Activated naive CD4-positive, alpha-beta T cell treated with anti-CD3 and anti-CD28 coated beads for 36 hours (primary cell): ENCODE measurements at regions of chr19 and their contacts with region 1.

Region 1: DNA sequence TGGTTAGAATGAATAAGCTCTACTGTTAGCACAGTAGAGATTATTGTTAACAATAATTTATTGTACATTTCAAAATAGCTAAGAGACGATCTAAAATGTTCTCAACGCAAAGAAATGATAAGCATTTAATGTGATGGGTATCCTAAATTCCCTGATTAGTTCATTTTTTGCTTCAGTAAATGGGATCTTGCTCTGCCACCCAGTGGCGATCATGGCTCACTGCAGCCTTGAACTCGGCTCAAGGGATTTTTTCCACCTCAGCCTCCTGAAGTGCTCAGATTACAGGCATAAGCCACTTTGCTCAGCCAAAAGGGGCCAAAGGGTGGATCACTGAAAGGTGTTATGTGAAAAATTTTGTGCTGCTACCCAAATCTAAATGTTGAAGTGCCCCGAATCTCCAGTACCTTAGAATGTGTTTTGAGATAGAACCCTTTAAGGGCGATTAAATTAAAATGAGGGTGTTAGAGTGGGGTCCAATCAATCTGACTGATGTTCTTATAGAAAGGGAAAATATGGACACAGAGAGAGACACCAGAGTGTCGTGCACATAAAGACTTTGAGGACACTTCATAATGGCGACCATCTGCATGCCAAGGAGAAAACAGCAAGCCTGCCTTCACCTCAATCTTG is 31.5 kb upstream of the ZNF766 start:
- DNase-seq: peak; percentile 75
- H3K4me3 Mint-ChIP-seq: no peak overlapping the region
- H3K27ac Mint-ChIP-seq: no peak overlapping the region
- H3K4me1 Mint-ChIP-seq: no peaks in the 10 kb centered on the region
- H3K27me3 Mint-ChIP-seq: no peaks in the 10 kb centered on the region

Region 2: GRCh38 chr19:51703575-51704515 is 534.0 kb before region 1 on chr19:
- CTCF ChIA-PET with region 1: no interaction called
- intact Hi-C with region 1: loop called (anchors 5 kb)
- DNase-seq: peak; percentile 97
- H3K4me3 Mint-ChIP-seq: peak overlapping the region; percentile 91
- H3K27ac Mint-ChIP-seq: peak overlapping the region; percentile 92
- H3K4me1 Mint-ChIP-seq: peaks cover 27% of the 10 kb centered on the region
- H3K27me3 Mint-ChIP-seq: peaks cover 3% of the 10 kb centered on the region

Region 3: DNA sequence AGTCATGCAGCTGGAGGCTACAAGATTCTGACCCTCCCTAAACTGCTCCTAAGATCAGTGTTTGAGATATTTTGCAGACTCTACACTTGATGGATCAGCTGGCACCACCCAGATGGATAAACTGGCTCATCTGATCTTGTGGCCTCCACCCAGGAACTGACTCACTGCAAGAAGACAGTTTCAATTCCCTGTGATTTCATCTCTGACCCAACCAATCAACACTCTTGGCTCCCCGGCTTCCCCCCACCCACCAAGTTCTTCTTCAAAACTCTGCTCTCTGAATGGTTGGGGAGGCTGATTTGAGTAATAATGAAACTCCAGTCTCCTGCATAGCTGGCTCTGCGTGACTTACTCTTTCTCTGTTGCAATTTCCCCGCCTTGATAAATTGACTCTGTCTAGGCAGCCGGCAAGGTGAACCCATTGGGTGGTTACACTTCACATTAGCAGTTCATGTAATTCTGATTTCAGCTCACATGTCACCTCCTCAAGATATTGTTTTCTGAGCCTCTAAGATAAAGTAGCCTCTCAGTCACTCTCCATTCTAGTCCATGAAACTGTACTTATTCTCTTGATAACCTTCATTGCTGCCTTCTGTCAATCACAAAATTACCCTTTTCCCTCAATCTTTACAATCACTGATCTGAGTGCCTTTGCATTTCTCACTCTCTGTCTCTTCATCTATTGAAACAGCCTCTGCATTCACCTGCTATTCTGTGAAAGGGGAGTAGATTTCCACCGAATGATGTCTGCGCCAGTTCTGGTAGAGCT is 452.8 kb before region 1 on chr19:
- CTCF ChIA-PET with region 1: no interaction called
- intact Hi-C with region 1: loop called (anchors 10 kb)
- DNase-seq: peak; percentile 85
- H3K4me3 Mint-ChIP-seq: no peak overlapping the region
- H3K27ac Mint-ChIP-seq: no peak overlapping the region
- H3K4me1 Mint-ChIP-seq: no peaks in the 10 kb centered on the region
- H3K27me3 Mint-ChIP-seq: peaks cover 13% of the 10 kb centered on the region

Region 4: GRCh38 chr19:51926784-51927742 is 310.8 kb before region 1 on chr19 and contains the start of gene ZNF613:
- CTCF ChIA-PET with region 1: no interaction called
- intact Hi-C with region 1: loop called (anchors 10 kb)
- DNase-seq: peak; percentile 91
- H3K4me3 Mint-ChIP-seq: peak within 1 kb of the TSS; percentile 96
- H3K27ac Mint-ChIP-seq: peak within 1 kb of the TSS; percentile 96
- H3K4me1 Mint-ChIP-seq: peaks cover 21% of the 10 kb centered on the region
- H3K27me3 Mint-ChIP-seq: no peaks in the 10 kb centered on the region
- total RNA-seq, gene ZNF613: 2.0 to 3.1 TPM

Region 5: DNA sequence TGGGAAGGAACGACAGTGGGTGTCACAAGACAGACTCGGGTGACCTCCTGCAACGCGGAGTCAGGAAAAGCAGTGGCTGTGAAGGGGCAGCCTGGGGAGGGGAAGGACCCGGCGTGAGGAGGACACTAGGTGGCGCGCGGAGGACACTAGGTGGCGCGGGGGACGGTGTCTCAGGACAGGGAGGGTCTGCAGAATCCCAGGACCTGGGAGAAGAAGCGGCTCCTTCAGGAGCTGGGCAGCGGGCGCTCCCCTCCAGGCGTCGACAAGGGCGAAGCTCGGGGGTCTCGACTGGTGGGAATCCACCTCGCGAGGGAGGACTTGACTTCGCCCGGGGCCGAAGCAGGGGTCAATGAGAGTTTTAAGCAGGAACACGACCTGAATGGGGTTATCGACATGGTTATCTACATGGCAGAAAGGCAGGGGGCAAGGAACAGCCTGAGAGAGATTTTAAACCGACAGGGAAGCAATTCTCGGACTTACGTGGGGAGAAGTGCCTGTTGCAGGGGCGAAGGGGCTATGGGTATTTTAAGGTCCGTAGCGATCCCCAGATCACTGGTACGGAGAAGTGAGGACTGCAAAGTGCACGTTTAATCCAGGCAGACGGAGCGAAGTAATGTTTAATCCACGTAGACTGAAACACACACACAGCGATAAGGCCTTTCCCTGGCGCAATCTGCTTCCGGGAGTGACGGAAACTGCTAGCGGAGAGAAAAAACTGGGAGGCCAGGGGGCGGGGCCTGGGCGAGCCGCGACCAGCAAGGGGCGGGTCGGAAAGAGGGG is 98.4 kb before region 1 on chr19 and contains the start of gene ZNF616:
- CTCF ChIA-PET with region 1: interaction called, 15 read pairs
- intact Hi-C with region 1: loop called (anchors 1 kb)
- DNase-seq: peak; percentile 99
- H3K4me3 Mint-ChIP-seq: peak within 1 kb of the TSS; percentile 96
- H3K27ac Mint-ChIP-seq: peak within 1 kb of the TSS; percentile 93
- H3K4me1 Mint-ChIP-seq: peaks cover 24% of the 10 kb centered on the region
- H3K27me3 Mint-ChIP-seq: no peaks in the 10 kb centered on the region
- total RNA-seq, gene ZNF616: 7.6 to 8.7 TPM

Region 6: GRCh38 chr19:52227196-52227940 is 10.5 kb before region 1 on chr19:
- CTCF ChIA-PET with region 1: interaction called, 11 read pairs
- intact Hi-C with region 1: no loop called
- DNase-seq: no peak
- H3K4me3 Mint-ChIP-seq: no peak overlapping the region
- H3K27ac Mint-ChIP-seq: peak overlapping the region; percentile 85
- H3K4me1 Mint-ChIP-seq: peaks cover 32% of the 10 kb centered on the region
- H3K27me3 Mint-ChIP-seq: no peaks in the 10 kb centered on the region